ENCODE measurements at regions of chr12 and their contacts with region 1.

Region 1: GRCh38 chr12:120833849-120834248 is 70.3 kb downstream of the SPPL3 start:
- DNase-seq: no peak
- ATAC-seq: peak; percentile 67
- H3K4me3 ChIP-seq: peak overlapping the region; percentile 66
- H3K27ac ChIP-seq: peak overlapping the region; percentile 96
- H3K4me1 ChIP-seq: peaks cover 64% of the 10 kb centered on the region
- H3K27me3 ChIP-seq: no peaks in the 10 kb centered on the region
- CTCF ChIP-seq: no peak
- EP300 ChIP-seq: no peak
- POLR2A ChIP-seq: no peak
- RAD21 ChIP-seq: no peak

Region 2: DNA sequence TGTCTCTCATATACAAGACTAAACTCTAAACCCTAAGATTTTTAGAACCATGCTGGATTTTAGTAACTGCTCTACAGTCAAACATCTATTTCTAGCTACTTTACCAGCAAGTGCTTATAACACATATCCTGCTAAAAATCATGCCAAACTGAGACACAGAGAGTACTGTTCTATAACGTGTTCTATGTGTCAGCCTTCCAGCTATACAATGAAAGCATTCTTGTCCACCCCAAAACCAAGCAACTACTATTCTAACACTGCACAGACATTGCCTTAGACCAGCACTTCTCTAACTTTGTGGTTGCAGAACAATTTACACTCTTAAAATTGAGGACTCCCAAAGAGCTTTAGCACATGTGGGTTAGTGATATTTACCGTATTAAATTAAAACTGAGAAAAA is 15.4 kb before region 1 on chr12:
- CTCF ChIA-PET with region 1: interaction called, 4 read pairs
- POLR2A ChIA-PET with region 1: interaction called, 5 read pairs
- RAD21 ChIA-PET with region 1: interaction called, 3 read pairs
- SMC1A ChIA-PET with region 1: interaction called, 21 read pairs
- in situ Hi-C with region 1: no loop called
- intact Hi-C with region 1: no loop called
- DNase-seq: no peak
- ATAC-seq: no peak
- H3K4me3 ChIP-seq: no peak overlapping the region
- H3K27ac ChIP-seq: no peak overlapping the region
- H3K4me1 ChIP-seq: peaks cover 24% of the 10 kb centered on the region
- H3K27me3 ChIP-seq: no peaks in the 10 kb centered on the region
- CTCF ChIP-seq: no peak
- EP300 ChIP-seq: no peak
- POLR2A ChIP-seq: no peak
- RAD21 ChIP-seq: no peak

Region 3: DNA sequence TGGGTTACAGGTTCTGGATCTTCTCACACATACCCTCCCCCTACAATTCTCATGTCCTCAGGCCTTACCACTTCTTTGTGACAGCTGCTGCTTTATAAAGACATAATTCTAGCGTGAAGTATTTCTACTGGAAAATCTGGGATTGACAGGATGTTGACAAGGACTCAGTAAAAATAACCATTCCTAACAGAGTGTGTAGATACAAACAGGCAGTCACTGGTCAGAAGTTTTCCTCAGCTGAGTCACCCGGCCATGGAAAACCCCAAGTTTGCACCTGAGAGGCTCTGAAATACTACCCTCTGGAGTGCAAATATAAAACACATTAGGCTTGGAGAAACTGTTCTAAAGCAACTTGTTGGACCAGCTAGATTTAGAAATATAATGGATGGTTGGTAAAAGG is 15.9 kb after region 1 on chr12:
- CTCF ChIA-PET with region 1: interaction called, 21 read pairs
- POLR2A ChIA-PET with region 1: interaction called, 71 read pairs
- RAD21 ChIA-PET with region 1: interaction called, 81 read pairs
- SMC1A ChIA-PET with region 1: interaction called, 131 read pairs
- in situ Hi-C with region 1: no loop called
- intact Hi-C with region 1: no loop called
- DNase-seq: no peak
- ATAC-seq: no peak
- H3K4me3 ChIP-seq: no peak overlapping the region
- H3K27ac ChIP-seq: peak overlapping the region; percentile 54
- H3K4me1 ChIP-seq: peaks cover 68% of the 10 kb centered on the region
- H3K27me3 ChIP-seq: no peaks in the 10 kb centered on the region
- CTCF ChIP-seq: no peak
- EP300 ChIP-seq: no peak
- POLR2A ChIP-seq: no peak
- RAD21 ChIP-seq: no peak

Region 4: GRCh38 chr12:120856980-120857379 is 23.1 kb after region 1 on chr12:
- CTCF ChIA-PET with region 1: interaction called, 7 read pairs
- POLR2A ChIA-PET with region 1: interaction called, 71 read pairs
- RAD21 ChIA-PET with region 1: interaction called, 81 read pairs
- SMC1A ChIA-PET with region 1: interaction called, 131 read pairs
- in situ Hi-C with region 1: no loop called
- intact Hi-C with region 1: no loop called
- DNase-seq: no peak
- ATAC-seq: no peak; the same call in 2 of the 3 replicates
- H3K4me3 ChIP-seq: no peak overlapping the region
- H3K27ac ChIP-seq: peak overlapping the region; percentile 27; the same call in 1 of the 2 replicates
- H3K4me1 ChIP-seq: peaks cover 32% of the 10 kb centered on the region
- H3K27me3 ChIP-seq: no peaks in the 10 kb centered on the region
- CTCF ChIP-seq: peak; percentile 30 to 52 (median 34); a peak in 4 of 6 replicates
- EP300 ChIP-seq: no peak
- POLR2A ChIP-seq: no peak
- RAD21 ChIP-seq: peak; percentile 63

Region 5: DNA sequence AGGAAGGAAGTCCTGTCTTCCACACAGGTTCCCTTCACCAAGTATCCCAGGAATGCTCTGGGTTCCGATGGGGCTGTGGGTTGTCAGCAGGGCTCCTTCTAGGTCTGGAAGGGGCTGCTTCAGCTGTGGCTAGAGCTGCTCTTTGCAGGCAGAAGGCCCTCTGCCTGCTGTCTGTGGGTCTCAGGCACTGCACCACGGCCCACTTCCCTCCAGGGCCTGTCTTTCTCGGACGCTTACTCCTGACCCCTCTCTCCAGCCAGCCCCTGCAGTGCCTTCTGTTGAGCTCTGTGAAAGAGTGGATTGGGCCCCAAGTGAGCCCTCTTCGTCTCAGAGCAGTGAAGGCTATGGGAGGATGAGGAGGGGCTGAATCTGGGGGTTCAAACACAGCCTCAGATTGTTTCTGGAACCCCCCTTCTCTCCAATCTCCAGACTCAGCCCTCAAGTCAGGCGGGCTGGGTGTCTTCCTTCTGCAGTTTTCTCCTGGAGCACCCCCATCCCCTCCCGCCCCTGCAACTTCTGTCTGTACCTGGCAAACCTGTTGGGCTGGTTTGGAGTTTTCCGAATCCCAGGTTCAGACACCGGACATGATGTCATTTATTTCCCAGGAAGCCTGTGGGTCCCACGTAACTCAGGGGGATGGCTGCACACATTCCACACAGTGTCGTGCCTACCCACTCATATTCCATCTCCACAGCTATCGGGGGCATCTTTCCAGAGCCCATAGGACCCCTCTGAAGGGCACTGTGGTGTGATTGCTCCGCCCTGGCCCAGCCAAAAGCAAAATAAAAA is 95.2 kb after region 1 on chr12:
- CTCF ChIA-PET with region 1: no interaction called
- POLR2A ChIA-PET with region 1: no interaction called
- RAD21 ChIA-PET with region 1: no interaction called
- SMC1A ChIA-PET with region 1: no interaction called
- in situ Hi-C with region 1: no loop called
- intact Hi-C with region 1: no loop called
- DNase-seq: no peak
- ATAC-seq: no peak
- H3K4me3 ChIP-seq: no peak overlapping the region
- H3K27ac ChIP-seq: no peak overlapping the region
- H3K4me1 ChIP-seq: no peaks in the 10 kb centered on the region
- H3K27me3 ChIP-seq: no peaks in the 10 kb centered on the region; a peak in 1 of 4 replicates
- CTCF ChIP-seq: no peak
- EP300 ChIP-seq: no peak
- POLR2A ChIP-seq: no peak
- RAD21 ChIP-seq: no peak

Measured in GM12878 (cell line).